Activated CD4-positive, alpha-beta memory T cell treated with anti-CD3 and anti-CD28 coated beads for 36 hours (primary cell): ENCODE measurements at regions of chr16 and their contacts with region 1.

Region 1: GRCh38 chr16:67892899-67893742 is at the start of gene PSKH1:
- DNase-seq: peak; percentile 98
- H3K4me3 Mint-ChIP-seq: peak within 1 kb of the TSS; percentile 96
- H3K27ac Mint-ChIP-seq: peak within 1 kb of the TSS; percentile 89
- H3K4me1 Mint-ChIP-seq: peaks cover 29% of the 10 kb centered on the region
- H3K27me3 Mint-ChIP-seq: no peaks in the 10 kb centered on the region
- total RNA-seq, gene PSKH1: 10.0 to 11.7 TPM

Region 2: GRCh38 chr16:67917852-67918236 is 24.7 kb after region 1 on chr16:
- CTCF ChIA-PET with region 1: no interaction called
- POLR2A ChIA-PET with region 1: no interaction called
- intact Hi-C with region 1: loop called (anchors 1 kb)
- DNase-seq: peak; percentile 75
- H3K4me3 Mint-ChIP-seq: no peak overlapping the region
- H3K27ac Mint-ChIP-seq: peak overlapping the region; percentile 77
- H3K4me1 Mint-ChIP-seq: peaks cover 31% of the 10 kb centered on the region
- H3K27me3 Mint-ChIP-seq: no peaks in the 10 kb centered on the region

Region 3: DNA sequence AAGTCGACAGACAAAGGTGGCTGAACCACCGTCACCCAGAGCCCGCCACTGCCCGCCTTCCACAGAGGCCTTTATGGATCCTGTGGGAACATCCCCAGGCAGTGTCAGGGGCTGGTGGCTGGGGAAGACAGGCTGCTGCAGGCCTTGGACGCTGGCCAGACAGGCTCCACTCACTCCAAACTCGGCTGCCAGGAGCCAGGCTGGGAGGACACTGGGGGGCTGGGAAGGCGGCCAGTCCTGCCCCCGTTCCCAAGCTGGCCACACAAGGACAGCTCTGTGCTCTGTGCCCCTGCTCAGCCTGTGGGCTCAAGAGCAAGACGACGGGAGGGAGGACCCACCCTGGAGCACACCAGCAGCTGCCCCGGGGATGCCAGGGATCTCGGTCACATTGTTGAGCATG is 58.4 kb after region 1 on chr16:
- CTCF ChIA-PET with region 1: no interaction called
- POLR2A ChIA-PET with region 1: no interaction called
- intact Hi-C with region 1: no loop called
- DNase-seq: no peak
- H3K4me3 Mint-ChIP-seq: no peak overlapping the region
- H3K27ac Mint-ChIP-seq: no peak overlapping the region
- H3K4me1 Mint-ChIP-seq: peaks cover 2% of the 10 kb centered on the region
- H3K27me3 Mint-ChIP-seq: no peaks in the 10 kb centered on the region

Region 4: DNA sequence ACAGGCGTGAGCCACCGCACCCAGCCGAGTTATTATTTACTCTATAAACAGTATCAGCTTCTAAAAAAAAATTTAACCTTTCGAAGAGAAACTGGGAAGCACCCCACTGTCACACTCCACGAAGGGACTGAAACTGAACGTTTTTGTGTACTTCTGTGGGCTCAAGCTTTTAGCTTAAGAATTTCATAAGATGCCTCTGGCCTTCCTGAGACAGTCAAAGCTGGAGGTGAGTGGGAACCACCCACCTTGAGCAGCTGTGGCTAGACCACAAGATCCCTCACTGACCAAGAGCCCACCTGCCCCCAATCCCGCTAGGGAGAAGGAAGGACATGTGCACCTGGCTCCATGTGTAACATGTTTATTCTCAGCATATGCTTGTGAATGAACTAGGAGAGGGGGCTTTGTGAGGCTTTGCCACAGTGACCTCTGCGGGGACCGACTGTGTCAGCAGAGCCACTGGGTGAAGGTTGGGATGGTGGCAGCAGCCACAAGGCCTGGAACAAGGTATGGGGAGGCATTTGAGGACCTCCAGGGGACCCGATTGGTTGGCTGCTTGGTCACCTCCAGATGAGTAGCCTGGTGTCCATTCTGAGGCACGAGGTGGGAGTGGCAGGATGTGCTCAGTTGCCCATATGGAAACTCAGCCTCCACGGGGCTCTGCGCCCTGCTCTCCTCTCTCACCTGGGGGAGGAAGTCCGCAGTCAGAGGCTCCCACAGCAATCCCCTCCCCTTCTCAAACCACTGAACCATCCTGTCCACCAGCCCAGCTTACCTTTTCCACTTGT is 82.4 kb after region 1 on chr16:
- CTCF ChIA-PET with region 1: no interaction called
- POLR2A ChIA-PET with region 1: no interaction called
- intact Hi-C with region 1: no loop called
- DNase-seq: no peak
- H3K4me3 Mint-ChIP-seq: no peak overlapping the region
- H3K27ac Mint-ChIP-seq: no peak overlapping the region
- H3K4me1 Mint-ChIP-seq: no peaks in the 10 kb centered on the region
- H3K27me3 Mint-ChIP-seq: no peaks in the 10 kb centered on the region